ENCODE measurements at regions of chr10 and their contacts with region 1.

Region 1: DNA sequence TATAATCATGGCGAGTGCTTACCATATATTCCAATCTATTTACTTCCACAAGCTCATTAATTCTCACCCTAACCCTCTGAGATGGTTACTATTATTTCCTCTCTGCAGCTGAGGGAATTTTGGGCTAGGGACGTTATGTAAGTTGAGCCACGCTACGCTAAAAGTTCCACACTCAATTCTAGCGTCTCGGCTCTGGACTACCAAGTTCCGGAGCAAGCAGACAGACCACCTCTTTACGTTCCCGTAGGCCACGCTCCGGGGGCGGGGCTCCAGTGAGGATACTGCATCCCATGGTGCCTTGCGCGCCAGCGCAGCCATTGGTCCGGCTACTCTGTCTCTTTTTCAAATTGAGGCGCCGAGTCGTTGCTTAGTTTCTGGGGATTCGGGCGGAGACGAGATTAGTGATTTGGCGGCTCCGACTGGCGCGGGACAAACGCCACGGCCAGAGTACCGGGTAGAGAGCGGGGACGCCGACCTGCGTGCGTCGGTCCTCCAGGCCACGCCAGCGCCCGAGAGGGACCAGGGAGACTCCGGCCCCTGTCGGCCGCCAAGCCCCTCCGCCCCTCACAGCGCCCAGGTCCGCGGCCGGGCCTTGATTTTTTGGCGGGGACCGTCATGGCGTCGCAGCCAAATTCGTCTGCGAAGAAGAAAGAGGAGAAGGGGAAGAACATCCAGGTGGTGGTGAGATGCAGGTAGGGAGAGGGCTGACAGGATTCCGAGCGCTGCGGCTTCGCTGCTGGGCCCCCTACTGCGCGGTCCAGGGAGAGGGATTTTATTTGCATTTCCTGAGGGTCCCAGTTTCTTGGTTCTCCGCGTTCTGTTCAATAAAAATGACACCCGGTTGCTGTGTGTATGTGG is at the start of gene KIF11:
- DNase-seq: peak; percentile 95
- H3K4me3 Mint-ChIP-seq: peak within 1 kb of the TSS; percentile 96
- H3K27ac Mint-ChIP-seq: peak within 1 kb of the TSS; percentile 97
- H3K4me1 Mint-ChIP-seq: peaks cover 58% of the 10 kb centered on the region
- H3K27me3 Mint-ChIP-seq: no peaks in the 10 kb centered on the region
- total RNA-seq, gene KIF11: 37.3 and 38.7 TPM in 2 replicates

Region 2: GRCh38 chr10:91220194-91220953 is 1372.6 kb before region 1 on chr10 and contains the start of gene PCGF5:
- intact Hi-C with region 1: loop called (anchors 10 kb)
- DNase-seq: peak; percentile 91
- H3K4me3 Mint-ChIP-seq: peak within 1 kb of the TSS; percentile 91
- H3K27ac Mint-ChIP-seq: peak within 1 kb of the TSS; percentile 79
- H3K4me1 Mint-ChIP-seq: peaks cover 54% of the 10 kb centered on the region
- H3K27me3 Mint-ChIP-seq: no peaks in the 10 kb centered on the region
- total RNA-seq, gene PCGF5: 51.7 TPM in 2 replicates

Region 3: GRCh38 chr10:91923371-91924211 is 669.4 kb before region 1 on chr10 and contains the start of gene BTAF1:
- intact Hi-C with region 1: loop called (anchors 5 kb)
- DNase-seq: peak; percentile 89
- H3K4me3 Mint-ChIP-seq: peak within 1 kb of the TSS; percentile 98
- H3K27ac Mint-ChIP-seq: peak within 1 kb of the TSS; percentile 99
- H3K4me1 Mint-ChIP-seq: peaks cover 36% of the 10 kb centered on the region
- H3K27me3 Mint-ChIP-seq: peaks cover 9% of the 10 kb centered on the region
- total RNA-seq, gene BTAF1: 58.8 and 59.2 TPM in 2 replicates

Region 4: DNA sequence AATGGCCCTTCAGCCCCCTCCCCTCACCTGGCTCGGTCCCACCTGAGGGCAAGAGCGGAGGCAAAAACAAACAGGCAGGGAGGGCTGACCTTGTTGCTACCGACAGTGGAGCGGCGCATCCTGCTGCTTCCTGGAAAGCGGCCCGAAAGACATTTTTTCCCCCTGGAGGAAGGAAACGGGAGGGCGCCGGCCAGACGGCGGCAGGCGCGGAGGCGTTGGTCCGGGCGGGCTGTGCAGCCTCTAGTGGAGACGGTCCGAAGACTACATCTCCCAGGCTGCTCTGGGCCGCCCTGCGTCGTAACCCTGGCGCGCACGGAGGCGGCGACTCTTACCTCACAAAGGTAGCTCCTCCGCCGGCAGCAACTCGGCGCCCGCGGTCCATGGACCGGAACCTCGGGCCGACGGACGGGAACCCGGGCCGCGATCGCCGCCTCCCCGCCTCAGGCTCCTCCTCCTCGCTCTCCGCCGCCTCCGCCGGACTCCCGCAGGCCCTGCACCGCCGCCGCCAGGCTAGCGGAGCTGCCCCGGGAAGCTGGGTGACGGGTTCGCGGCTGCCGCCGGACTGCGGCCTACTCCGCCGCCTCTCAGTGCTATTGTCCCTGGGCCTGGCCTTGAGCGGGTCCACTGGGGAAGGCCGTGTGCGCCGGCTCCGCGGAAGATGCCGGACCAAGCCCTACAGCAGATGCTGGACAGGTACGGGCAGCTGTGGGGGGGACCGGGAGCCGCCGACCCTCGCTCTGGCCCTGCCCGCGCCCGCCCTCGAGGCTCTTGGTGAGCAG is 302.0 kb before region 1 on chr10 and contains the starts of genes CPEB3 and MARCHF5:
- intact Hi-C with region 1: loop called (anchors 1 kb)
- DNase-seq: peak; percentile 92
- H3K4me3 Mint-ChIP-seq: peak within 1 kb of the TSS; percentile 93
- H3K27ac Mint-ChIP-seq: peak within 1 kb of the TSS; percentile 86
- H3K4me1 Mint-ChIP-seq: peaks cover 27% of the 10 kb centered on the region
- H3K27me3 Mint-ChIP-seq: no peaks in the 10 kb centered on the region
- total RNA-seq, gene CPEB3: 2.5 and 2.7 TPM in 2 replicates
- total RNA-seq, gene MARCHF5: 22.5 and 23.9 TPM in 2 replicates

Region 5: DNA sequence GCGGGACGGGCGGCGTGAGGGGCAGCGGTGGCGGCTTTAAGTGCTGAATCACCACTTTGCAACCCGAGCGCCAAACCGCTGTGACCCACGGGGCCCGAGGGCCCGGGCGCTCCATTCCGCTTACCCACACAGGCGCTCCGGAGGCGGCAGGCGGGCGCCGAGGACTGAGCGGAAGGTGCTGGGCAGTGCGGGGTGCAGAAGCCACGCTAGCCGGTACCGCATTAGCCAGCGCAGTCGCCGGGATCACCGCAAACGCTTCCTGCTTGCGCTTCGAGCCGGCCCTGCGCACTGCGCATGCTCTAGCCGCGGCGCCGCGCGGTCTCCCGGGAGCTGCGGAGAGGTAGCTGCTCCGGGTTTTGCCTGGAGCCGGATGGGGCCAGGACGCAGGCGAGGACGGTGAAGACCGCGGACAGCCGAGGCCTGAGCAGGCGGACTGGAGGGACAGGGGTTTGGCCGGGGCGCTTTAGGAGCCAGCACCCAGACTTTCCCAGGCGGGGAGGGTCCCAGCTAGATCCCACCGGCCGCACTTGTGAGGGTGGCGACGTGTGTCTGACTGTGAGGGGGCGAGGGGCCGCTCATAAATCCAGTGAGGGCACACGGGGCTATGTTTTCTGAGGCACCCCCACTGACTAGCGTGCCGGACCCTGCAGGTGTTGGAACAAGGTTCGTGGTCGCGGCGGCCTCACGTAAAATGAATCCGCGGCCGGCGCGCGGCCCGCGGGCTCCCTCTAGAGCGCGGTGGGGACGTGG is 19.0 kb before region 1 on chr10 and contains the start of gene IDE:
- intact Hi-C with region 1: loop called (anchors 1 kb)
- DNase-seq: peak; percentile 84
- H3K4me3 Mint-ChIP-seq: peak within 1 kb of the TSS; percentile 88
- H3K27ac Mint-ChIP-seq: peak within 1 kb of the TSS; percentile 89
- H3K4me1 Mint-ChIP-seq: peaks cover 37% of the 10 kb centered on the region
- H3K27me3 Mint-ChIP-seq: no peaks in the 10 kb centered on the region
- total RNA-seq, gene IDE: 43.4 and 54.5 TPM in 2 replicates

Region 6: DNA sequence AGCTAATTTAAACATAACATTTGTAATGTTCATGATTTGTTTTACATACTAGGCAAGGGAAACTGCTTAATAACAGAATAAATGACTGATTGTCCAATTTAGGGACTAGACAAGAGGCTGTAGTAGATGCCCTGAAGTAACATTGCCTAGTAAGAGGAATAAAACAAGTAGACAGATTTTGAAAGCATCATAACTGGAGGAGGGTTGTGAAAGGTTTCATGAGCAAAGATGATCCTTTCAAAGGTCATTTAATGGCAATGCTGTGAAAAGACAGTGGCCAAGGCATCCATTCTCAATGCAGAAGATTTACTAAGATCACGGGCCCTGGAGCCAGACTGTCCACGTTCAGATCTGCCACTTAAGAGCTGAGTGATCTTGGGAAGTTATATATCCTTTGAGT is 51.9 kb after region 1 on chr10:
- intact Hi-C with region 1: loop called (anchors 1 kb)
- DNase-seq: no peak
- H3K4me3 Mint-ChIP-seq: no peak overlapping the region
- H3K27ac Mint-ChIP-seq: no peak overlapping the region
- H3K4me1 Mint-ChIP-seq: peaks cover 16% of the 10 kb centered on the region
- H3K27me3 Mint-ChIP-seq: no peaks in the 10 kb centered on the region

Region 7: GRCh38 chr10:92848441-92849233 is 255.6 kb after region 1 on chr10 and contains the start of gene EXOC6:
- intact Hi-C with region 1: loop called (anchors 2 kb)
- DNase-seq: peak; percentile 78
- H3K4me3 Mint-ChIP-seq: peak within 1 kb of the TSS; percentile 88
- H3K27ac Mint-ChIP-seq: peak within 1 kb of the TSS; percentile 93
- H3K4me1 Mint-ChIP-seq: peaks cover 38% of the 10 kb centered on the region
- H3K27me3 Mint-ChIP-seq: peaks cover 2% of the 10 kb centered on the region
- total RNA-seq, gene EXOC6: 13.5 TPM in 2 replicates

Region 8: GRCh38 chr10:92867235-92867634 is 274.2 kb after region 1 on chr10:
- intact Hi-C with region 1: no loop called
- DNase-seq: no peak
- H3K4me3 Mint-ChIP-seq: no peak overlapping the region
- H3K27ac Mint-ChIP-seq: no peak overlapping the region
- H3K4me1 Mint-ChIP-seq: no peaks in the 10 kb centered on the region
- H3K27me3 Mint-ChIP-seq: no peaks in the 10 kb centered on the region

Measured in activated T-helper 1 cell treated with anti-CD3 and anti-CD28 coated beads, Interleukin-12 subunit alpha, Interleukin-12 subunit beta, Interleukin-2, Interleukin-4 antibody, amounts not matched to agents 30 ng/mL and 10 ng/mL and 1 ng/mL, durations not matched to agents 14 hours and 24 hours and 36 hours (primary cell).